BJ (cell line): ENCODE measurements at regions of chr9 and their contacts with region 1.

Region 1: GRCh38 chr9:87684627-87685219 is 41.2 kb upstream of the CTSL start:
- DNase-seq: no peak
- H3K4me3 ChIP-seq: no peak overlapping the region
- H3K27me3 ChIP-seq: no peaks in the 10 kb centered on the region
- CTCF ChIP-seq: peak; percentile 77

Region 2: DNA sequence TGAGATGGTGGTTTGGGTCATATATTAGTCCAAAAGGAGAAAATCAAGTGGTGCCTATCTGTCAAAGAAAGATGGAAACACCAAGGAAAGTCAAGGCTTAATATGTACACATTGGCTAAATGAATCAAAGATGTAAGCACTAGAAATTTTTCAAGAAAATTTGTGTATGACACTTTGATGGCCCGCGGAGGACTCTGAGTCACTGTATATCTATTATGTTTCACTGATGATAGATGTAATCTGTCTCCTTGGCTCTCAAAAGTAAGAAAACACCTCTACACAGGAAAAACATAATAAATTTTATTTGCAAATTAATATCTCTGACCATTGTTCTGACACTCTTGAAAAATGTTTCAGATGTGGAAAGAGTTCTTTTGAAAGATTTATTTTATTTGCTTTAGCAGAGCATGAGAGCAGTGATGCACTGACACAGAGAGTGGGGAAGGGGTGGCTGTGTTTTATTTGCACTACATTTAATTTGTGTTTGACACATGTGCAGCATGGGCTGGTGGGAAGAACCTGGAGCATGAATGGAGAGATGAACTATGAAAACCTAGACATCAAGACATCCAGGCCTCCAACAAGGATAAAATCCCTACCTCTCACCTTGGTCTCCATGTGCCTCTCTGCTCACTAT is 556.6 kb before region 1 on chr9:
- CTCF ChIA-PET with region 1: no interaction called
- POLR2A ChIA-PET with region 1: no interaction called
- DNase-seq: no peak
- H3K4me3 ChIP-seq: no peak overlapping the region
- H3K27me3 ChIP-seq: no peaks in the 10 kb centered on the region
- CTCF ChIP-seq: no peak

Region 3: DNA sequence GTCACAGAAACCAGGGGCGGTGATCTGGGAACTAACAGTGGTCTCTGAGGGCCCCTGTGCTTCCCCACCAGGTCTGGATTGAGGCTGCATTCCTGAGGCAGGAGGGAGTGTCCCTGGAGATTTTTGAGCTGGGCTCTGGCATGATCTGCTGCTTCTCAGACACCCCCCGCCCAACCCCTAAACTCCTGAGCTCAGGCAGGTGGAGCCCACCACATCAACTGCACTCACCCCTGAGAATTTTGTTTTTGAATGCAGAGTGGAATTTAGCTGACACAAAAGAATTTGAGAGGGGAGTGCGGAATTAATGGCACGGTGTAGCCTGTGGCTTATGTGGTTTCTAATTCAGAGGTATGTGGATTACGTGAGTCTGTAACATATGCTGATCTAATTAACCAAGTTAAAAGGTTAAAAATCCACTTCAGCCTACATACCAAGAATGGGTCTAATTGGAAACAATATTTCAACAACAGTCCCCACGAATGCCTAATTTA is 17.3 kb after region 1 on chr9:
- CTCF ChIA-PET with region 1: interaction called, 27 read pairs
- POLR2A ChIA-PET with region 1: no interaction called
- DNase-seq: no peak
- H3K4me3 ChIP-seq: no peak overlapping the region
- H3K27me3 ChIP-seq: no peaks in the 10 kb centered on the region
- CTCF ChIP-seq: no peak

Region 4: GRCh38 chr9:87725900-87726709 is 41.4 kb after region 1 on chr9 and contains the start of gene CTSL:
- CTCF ChIA-PET with region 1: interaction called, 23 read pairs
- POLR2A ChIA-PET with region 1: no interaction called
- DNase-seq: peak; percentile 52
- H3K4me3 ChIP-seq: peak within 1 kb of the TSS; percentile 77
- H3K27me3 ChIP-seq: no peaks in the 10 kb centered on the region
- CTCF ChIP-seq: peak; percentile 33
- polyA plus RNA-seq, gene CTSL: 146 and 200 TPM in 2 replicates

Region 5: GRCh38 chr9:87812375-87813118 is 127.8 kb after region 1 on chr9:
- CTCF ChIA-PET with region 1: interaction called, 55 read pairs
- POLR2A ChIA-PET with region 1: no interaction called
- DNase-seq: peak; percentile 31
- H3K4me3 ChIP-seq: no peak overlapping the region
- H3K27me3 ChIP-seq: peaks cover 5% of the 10 kb centered on the region
- CTCF ChIP-seq: peak; percentile 97

Region 6: GRCh38 chr9:87883990-87884389 is 199.3 kb after region 1 on chr9:
- CTCF ChIA-PET with region 1: interaction called, 10 read pairs
- POLR2A ChIA-PET with region 1: no interaction called
- DNase-seq: no peak
- H3K4me3 ChIP-seq: no peak overlapping the region
- H3K27me3 ChIP-seq: 0 out of 2 replicates have a peak, but pooled peaks cover 3% of the 10 kb centered on the region
- CTCF ChIP-seq: peak; percentile 17; the same call in 1 of the 2 replicates

Region 7: DNA sequence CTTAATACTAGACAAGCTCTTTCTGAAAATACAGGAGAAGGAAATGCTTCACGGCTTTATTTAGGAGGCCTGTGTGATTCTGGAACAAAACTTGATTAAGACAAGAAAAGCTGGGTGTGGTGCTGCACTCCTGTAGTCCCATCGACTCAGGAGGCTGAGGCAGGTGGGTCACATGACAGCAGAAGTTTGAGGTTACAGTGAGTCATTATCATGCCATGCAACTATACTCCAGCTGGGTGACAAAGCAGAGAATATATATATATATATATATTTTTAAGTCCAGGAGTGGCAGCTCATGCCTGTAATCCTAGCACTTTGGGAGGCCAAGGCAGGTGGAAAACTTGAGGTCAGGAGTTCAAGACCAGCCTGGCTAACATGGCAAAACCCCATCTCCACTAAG is 670.4 kb after region 1 on chr9:
- CTCF ChIA-PET with region 1: no interaction called
- POLR2A ChIA-PET with region 1: no interaction called
- DNase-seq: no peak
- H3K4me3 ChIP-seq: no peak overlapping the region
- H3K27me3 ChIP-seq: no peaks in the 10 kb centered on the region
- CTCF ChIP-seq: no peak